Psoas muscle (tissue), 8 donors: ENCODE measurements at regions of chr11 and their contacts with region 1.

Region 1: DNA sequence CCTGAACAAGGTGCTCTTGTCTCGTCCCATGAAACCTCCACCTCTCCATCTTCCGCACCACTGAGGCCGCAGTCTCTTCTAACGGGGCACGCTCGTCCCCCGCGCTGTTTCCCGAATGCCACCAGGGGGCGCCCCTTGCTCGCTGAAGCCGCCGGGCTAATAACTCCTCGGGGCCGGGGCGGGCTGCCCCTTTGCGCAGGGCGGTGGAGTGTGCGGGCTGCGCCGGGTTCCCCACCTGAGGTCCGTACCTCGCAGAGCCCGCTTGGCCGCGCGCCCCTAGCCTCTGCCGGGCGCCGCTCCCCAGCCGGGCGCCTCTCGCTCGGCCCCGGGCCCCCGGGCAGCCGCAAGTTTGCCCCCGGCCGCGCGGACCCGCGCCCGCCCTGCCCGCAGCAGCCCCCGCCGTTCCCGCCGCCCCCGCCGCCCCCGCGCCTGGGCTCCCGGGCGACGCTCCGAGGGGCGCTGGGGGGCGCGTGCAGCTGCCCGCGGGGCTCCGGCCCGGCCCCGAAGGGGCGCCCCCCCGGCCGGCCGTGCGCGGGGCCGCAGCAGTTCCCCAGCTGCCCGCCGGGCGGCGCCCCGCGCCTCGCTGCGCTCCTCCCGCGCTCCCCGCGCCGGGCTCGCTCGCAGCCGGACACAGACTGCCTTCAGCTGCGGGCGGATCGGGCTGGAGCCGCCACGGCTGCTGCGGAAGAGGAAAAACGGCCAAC is at the start of gene GRIK4:
- DNase-seq: peak; percentile 87 to 90
- ATAC-seq: peak; percentile 83 to 97 (median 90)
- H3K4me3 ChIP-seq: peak within 1 kb of the TSS; percentile 57
- H3K27ac ChIP-seq: no peak within 1 kb of the TSS
- H3K4me1 ChIP-seq: no peaks in the 10 kb centered on the region
- H3K27me3 ChIP-seq: peaks cover 0 to 59% (median 4%) of the 10 kb centered on the region in 3 donors
- CTCF ChIP-seq: peak; percentile 93
- total RNA-seq, gene GRIK4: 0.11 TPM in 1 of 4 donors, not detected in the others

Region 2: GRCh38 chr11:120413480-120413879 is 97.8 kb before region 1 on chr11:
- intact Hi-C with region 1: no loop called
- DNase-seq: no peak
- ATAC-seq: peak in 2 of 4 donors; percentile 43 to 45
- H3K4me3 ChIP-seq: no peak overlapping the region
- H3K27ac ChIP-seq: no peak overlapping the region
- H3K4me1 ChIP-seq: peaks cover 12% of the 10 kb centered on the region
- H3K27me3 ChIP-seq: no peaks in the 10 kb centered on the region
- CTCF ChIP-seq: no peak

Region 3: DNA sequence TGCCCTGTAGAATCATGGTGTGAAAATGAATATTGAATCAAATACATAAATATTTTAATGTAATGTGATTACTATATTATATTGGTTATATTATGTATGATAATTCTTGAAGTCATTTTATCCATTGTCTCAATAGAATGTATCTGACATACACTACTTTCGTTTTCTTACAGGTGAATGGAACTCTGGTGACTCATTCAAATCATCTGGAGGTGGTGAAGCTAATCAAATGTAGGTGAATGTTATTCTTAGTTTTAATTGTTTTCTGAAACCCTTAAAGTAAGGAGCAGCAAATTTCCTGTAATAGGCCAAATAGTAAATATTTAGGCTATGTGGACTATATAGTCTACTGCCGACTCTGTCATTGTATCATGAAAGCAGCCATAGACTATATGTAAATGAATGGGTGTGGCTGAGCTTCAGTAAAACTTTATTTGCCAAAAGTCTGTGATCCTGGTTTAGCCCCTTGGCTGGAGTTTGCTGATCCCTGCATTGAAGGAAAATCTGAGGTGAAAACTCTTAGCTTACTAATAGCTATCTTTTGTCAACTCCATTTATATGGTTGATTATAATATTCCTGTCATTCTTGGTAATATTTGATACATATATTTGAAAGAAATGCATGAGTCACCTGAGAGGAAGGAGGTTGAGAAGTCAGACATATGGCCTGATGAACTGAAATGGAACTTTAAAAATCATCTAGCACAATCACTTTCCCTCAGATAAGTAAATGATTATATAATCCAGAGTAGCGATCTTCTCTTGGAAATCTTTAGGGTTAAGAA is 86.9 kb before region 1 on chr11:
- intact Hi-C with region 1: no loop called
- DNase-seq: no peak
- ATAC-seq: no peak
- H3K4me3 ChIP-seq: no peak overlapping the region
- H3K27ac ChIP-seq: no peak overlapping the region
- H3K4me1 ChIP-seq: no peaks in the 10 kb centered on the region
- H3K27me3 ChIP-seq: no peaks in the 10 kb centered on the region
- CTCF ChIP-seq: no peak

Region 4: GRCh38 chr11:120682866-120683265 is 171.6 kb after region 1 on chr11:
- intact Hi-C with region 1: loop called (anchors 1 kb)
- DNase-seq: no peak
- ATAC-seq: no peak
- H3K4me3 ChIP-seq: no peak overlapping the region
- H3K27ac ChIP-seq: no peak overlapping the region
- H3K4me1 ChIP-seq: no peaks in the 10 kb centered on the region
- H3K27me3 ChIP-seq: peaks cover 0 to 27% (median 3%) of the 10 kb centered on the region in 3 donors
- CTCF ChIP-seq: no peak

Region 5: DNA sequence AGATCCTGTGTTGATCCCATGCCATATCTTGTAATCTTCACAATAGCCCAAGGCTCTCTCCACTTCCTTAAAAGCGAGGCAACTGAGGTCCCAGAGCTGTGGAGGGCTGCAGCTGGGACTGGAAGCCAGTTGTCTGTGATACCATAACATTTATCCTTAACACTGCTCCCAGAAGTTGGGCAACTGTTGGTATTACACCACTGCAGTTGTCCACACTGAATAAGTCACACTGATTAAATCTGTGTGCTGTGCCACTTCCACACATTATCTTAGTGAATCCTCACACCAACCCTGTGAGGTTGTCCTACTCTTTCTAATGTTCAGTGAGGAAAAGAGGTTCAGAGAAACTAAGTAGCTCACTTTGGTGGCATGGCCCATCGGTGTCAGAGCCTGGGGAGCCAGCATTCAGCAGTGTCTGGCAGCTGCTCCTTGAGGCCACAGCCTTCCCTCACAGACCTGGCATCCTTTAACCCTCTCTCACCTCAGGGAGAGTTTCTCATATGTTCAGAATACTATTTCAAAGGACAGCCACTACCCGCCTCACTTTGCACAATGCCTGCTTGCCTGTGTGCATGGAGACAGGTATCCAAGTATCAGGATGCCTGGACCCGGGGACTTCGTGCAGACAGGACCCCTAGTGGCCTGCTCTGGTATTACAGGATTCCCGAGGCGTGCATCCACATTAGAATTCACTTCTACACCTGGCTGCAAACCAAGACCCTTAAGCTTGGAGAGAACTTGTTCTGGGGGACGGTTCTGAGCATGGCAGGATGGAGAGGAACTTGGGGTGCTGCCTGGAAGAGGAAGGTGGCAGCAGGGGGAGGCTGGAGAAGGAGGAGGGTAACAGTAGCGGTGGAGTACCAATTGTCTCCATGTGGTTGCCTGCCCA is 290.8 kb after region 1 on chr11:
- intact Hi-C with region 1: loop called in 1 of 2 experiments (anchors 2 kb)
- DNase-seq: no peak
- ATAC-seq: no peak
- H3K4me3 ChIP-seq: no peak overlapping the region
- H3K27ac ChIP-seq: no peak overlapping the region
- H3K4me1 ChIP-seq: no peaks in the 10 kb centered on the region
- H3K27me3 ChIP-seq: peaks cover 0 to 3% (median 2%) of the 10 kb centered on the region in 3 donors
- CTCF ChIP-seq: peak; percentile 70

Region 6: DNA sequence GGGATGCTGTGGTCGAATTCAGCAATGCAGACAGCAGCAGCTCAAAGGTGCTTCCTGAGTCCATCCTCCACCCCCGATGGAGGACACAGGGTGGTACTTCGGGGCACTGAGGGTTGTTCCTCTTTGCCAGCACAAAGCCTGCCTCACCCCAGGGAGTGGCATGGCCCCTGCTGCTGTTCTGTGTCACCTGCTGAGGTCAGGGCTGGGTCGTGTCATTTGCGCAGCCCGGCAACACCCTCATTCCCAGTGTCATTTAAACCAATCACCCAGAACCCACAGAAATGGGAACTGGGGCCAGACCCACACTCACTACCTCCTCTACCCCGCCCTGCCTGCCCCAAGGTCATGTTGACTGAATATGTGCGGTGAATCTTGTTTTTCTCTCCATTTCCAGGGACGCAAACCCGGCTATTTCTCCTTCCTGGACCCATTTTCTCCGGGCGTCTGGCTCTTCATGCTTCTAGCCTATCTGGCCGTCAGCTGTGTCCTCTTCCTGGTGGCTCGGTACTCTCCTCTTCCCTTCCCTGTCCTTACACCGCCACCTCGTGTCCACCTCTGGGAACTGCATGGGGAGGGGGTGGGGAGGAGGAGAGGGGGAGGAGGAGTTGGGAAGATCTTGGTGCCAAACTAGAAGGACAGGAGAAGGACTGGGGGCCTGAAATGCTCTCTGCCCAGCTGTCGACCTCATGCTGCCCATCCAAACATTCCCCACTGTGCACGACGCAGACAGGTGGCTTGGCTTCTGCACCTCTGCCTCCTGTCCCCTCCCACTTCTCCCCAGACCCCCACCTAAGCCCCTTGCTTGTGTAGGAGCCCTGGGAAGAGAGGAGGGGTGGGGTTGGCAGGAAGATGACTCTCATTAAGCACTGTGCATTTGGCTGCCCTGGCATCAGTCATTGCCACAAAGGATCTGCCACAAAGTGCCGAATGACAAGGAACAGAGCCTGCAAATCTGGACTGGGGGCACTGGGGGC is 441.5 kb after region 1 on chr11:
- intact Hi-C with region 1: loop called (anchors 2 to 5 kb)
- DNase-seq: peak; percentile 72 to 83
- ATAC-seq: peak; percentile 82 to 96 (median 91)
- H3K4me3 ChIP-seq: peak overlapping the region; percentile 30
- H3K27ac ChIP-seq: no peak overlapping the region
- H3K4me1 ChIP-seq: no peaks in the 10 kb centered on the region
- H3K27me3 ChIP-seq: peaks cover 0 to 38% (median 2%) of the 10 kb centered on the region in 3 donors
- CTCF ChIP-seq: peak; percentile 43

Region 7: GRCh38 chr11:121112498-121113455 is 601.5 kb after region 1 on chr11:
- intact Hi-C with region 1: loop called (anchors 2 to 5 kb)
- DNase-seq: peak; percentile 51 to 65
- ATAC-seq: peak; percentile 83 to 95 (median 91)
- H3K4me3 ChIP-seq: no peak overlapping the region
- H3K27ac ChIP-seq: no peak overlapping the region
- H3K4me1 ChIP-seq: no peaks in the 10 kb centered on the region
- H3K27me3 ChIP-seq: no peaks in the 10 kb centered on the region
- CTCF ChIP-seq: peak; percentile 49

Region 8: GRCh38 chr11:121194731-121195596 is 683.7 kb after region 1 on chr11:
- intact Hi-C with region 1: loop called (anchors 5 to 10 kb)
- DNase-seq: no peak
- ATAC-seq: peak; percentile 54 to 76 (median 62)
- H3K4me3 ChIP-seq: no peak overlapping the region
- H3K27ac ChIP-seq: no peak overlapping the region
- H3K4me1 ChIP-seq: no peaks in the 10 kb centered on the region
- H3K27me3 ChIP-seq: peaks cover 0 to 12% (median 4%) of the 10 kb centered on the region in 3 donors
- CTCF ChIP-seq: peak; percentile 65

Region 9: GRCh38 chr11:121591405-121592033 is 1080.3 kb after region 1 on chr11:
- intact Hi-C with region 1: loop called in 1 of 2 experiments (anchors 10 kb)
- DNase-seq: no peak
- ATAC-seq: peak; percentile 69 to 88 (median 76)
- H3K4me3 ChIP-seq: no peak overlapping the region
- H3K27ac ChIP-seq: no peak overlapping the region
- H3K4me1 ChIP-seq: no peaks in the 10 kb centered on the region
- H3K27me3 ChIP-seq: no peaks in the 10 kb centered on the region
- CTCF ChIP-seq: peak; percentile 87